ENCODE measurements at regions of chr4 and their contacts with region 1.

Region 1: GRCh38 chr4:60709061-60709460 is 491.1 kb upstream of the ADGRL3 start:
- DNase-seq: no peak
- H3K4me3 ChIP-seq: no peak overlapping the region
- H3K27ac ChIP-seq: no peak overlapping the region
- H3K4me1 ChIP-seq: no peaks in the 10 kb centered on the region
- H3K27me3 ChIP-seq: no peaks in the 10 kb centered on the region
- CTCF ChIP-seq: no peak
- EP300 ChIP-seq: no peak
- POLR2A ChIP-seq: no peak

Region 2: DNA sequence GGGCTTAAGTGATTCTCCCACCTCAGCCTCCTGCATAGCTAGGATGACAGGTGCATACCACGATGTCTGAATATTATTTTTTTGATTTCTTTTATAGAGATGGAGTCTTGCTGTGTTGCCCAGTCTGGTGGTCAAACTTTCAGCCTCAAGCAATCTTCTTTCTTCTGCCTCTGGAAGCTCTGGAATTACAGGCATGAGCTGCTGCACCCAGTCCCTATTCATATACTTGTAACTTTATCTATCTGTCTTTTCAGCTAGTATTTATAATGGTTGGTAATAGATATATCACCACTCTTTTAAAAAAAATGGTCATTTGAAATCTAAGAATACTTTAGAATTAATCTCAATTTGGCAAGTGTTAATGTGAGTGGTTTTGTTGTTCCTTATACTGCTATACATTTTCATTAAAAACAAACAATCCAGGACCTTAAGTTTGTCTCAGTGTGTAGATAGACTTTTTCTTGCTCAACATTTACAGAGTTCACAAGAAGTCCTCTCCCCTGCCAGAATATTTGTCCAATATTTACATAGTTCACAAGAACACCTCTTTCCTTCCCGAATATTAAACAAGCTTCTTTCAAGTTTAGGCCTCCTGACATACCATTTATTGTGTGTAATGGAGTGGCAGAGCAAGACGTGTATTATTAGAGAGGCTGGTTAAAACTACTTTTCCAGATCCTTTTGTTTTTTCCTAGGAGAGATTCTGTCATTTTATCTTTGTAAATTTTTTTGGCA is 706.3 kb before region 1 on chr4:
- intact Hi-C with region 1: loop called in 1 of 4 experiments (anchors 5 kb)
- DNase-seq: no peak
- H3K4me3 ChIP-seq: no peak overlapping the region
- H3K27ac ChIP-seq: no peak overlapping the region
- H3K4me1 ChIP-seq: no peaks in the 10 kb centered on the region
- H3K27me3 ChIP-seq: no peaks in the 10 kb centered on the region
- CTCF ChIP-seq: no peak
- EP300 ChIP-seq: no peak
- POLR2A ChIP-seq: no peak

Region 3: DNA sequence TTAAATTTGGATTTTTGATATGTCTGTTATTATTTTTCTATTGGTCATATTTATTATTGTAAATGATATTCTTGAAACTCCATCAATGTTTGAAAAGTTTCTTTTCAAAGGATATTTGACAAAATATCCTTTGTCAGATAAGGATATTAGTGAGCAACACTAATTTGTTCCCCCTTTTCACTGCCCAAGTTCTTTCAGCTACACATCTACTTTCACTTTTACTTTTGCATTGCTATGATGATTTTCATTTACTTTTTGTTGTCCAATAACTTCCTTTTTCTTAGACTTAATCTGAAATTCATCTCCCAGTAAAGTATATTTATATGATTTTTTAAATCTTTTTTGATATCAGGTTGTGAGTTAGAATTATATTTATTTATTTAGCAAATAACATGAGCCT is 51.3 kb before region 1 on chr4:
- intact Hi-C with region 1: no loop called
- DNase-seq: no peak
- H3K4me3 ChIP-seq: no peak overlapping the region
- H3K27ac ChIP-seq: no peak overlapping the region
- H3K4me1 ChIP-seq: peaks cover 1% of the 10 kb centered on the region
- H3K27me3 ChIP-seq: no peaks in the 10 kb centered on the region
- CTCF ChIP-seq: no peak
- EP300 ChIP-seq: no peak
- POLR2A ChIP-seq: no peak

Region 4: GRCh38 chr4:61431131-61431530 is 722.1 kb after region 1 on chr4:
- intact Hi-C with region 1: no loop called
- DNase-seq: no peak
- H3K4me3 ChIP-seq: no peak overlapping the region
- H3K27ac ChIP-seq: no peak overlapping the region
- H3K4me1 ChIP-seq: no peaks in the 10 kb centered on the region
- H3K27me3 ChIP-seq: no peaks in the 10 kb centered on the region
- CTCF ChIP-seq: no peak
- EP300 ChIP-seq: no peak
- POLR2A ChIP-seq: no peak